H1 (cell line): ENCODE measurements at regions of chr5 and their contacts with region 1.

Region 1: GRCh38 chr5:137660349-137660817 is 75.5 kb downstream of the KLHL3 start:
- DNase-seq: peak; percentile 68 to 79
- H3K4me3 ChIP-seq: no peak overlapping the region
- H3K27ac ChIP-seq: no peak overlapping the region
- H3K4me1 ChIP-seq: peaks cover 0 to 3% (median 0%) of the 10 kb centered on the region in 4 experiments; a peak in 1 of 7 replicates
- H3K27me3 ChIP-seq: no peaks in the 10 kb centered on the region
- CTCF ChIP-seq: peak; percentile 54 to 86 (median 83)
- EP300 ChIP-seq: no peak
- POLR2A ChIP-seq: no peak
- RAD21 ChIP-seq: peak; percentile 84 to 86

Region 2: DNA sequence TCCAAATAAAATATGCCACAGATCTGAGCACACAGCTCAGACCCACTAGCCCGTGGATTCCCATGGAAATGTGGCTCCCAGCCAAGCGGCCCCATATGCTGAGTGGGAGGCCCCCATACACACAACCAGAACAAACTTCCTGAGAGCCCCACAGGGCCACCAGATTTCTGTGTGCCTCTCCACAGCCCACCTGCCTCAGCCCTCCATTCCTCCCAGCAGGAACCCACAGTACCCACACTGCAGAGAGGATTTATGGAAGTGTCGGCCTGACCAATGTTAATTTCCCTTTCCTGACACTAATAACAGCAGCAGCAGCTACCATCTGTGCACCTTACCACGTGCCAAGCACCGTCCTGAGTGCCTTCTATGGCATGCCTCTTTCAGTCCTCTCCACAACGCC is 62.0 kb before region 1 on chr5:
- CTCF ChIA-PET with region 1: no interaction called
- POLR2A ChIA-PET with region 1: no interaction called
- DNase-seq: no peak
- H3K4me3 ChIP-seq: no peak overlapping the region
- H3K27ac ChIP-seq: no peak overlapping the region
- H3K4me1 ChIP-seq: no peaks in the 10 kb centered on the region
- H3K27me3 ChIP-seq: no peaks in the 10 kb centered on the region
- CTCF ChIP-seq: no peak
- EP300 ChIP-seq: no peak
- POLR2A ChIP-seq: no peak
- RAD21 ChIP-seq: no peak

Region 3: GRCh38 chr5:137629646-137630045 is 30.7 kb before region 1 on chr5:
- CTCF ChIA-PET with region 1: interaction called, 17 read pairs
- POLR2A ChIA-PET with region 1: no interaction called
- DNase-seq: peak in 1 of 2 experiments; percentile 58
- H3K4me3 ChIP-seq: no peak overlapping the region
- H3K27ac ChIP-seq: no peak overlapping the region
- H3K4me1 ChIP-seq: peaks cover 3 to 6% (median 4%) of the 10 kb centered on the region in 4 experiments; a peak in 6 of 7 replicates
- H3K27me3 ChIP-seq: no peaks in the 10 kb centered on the region
- CTCF ChIP-seq: peak in 2 of 3 experiments; percentile 77 to 84; a peak in 3 of 4 replicates
- EP300 ChIP-seq: no peak
- POLR2A ChIP-seq: no peak
- RAD21 ChIP-seq: peak; percentile 94 to 96

Region 4: GRCh38 chr5:137672019-137672418 is 11.6 kb after region 1 on chr5:
- CTCF ChIA-PET with region 1: interaction called, 41 read pairs
- POLR2A ChIA-PET with region 1: no interaction called
- DNase-seq: no peak
- H3K4me3 ChIP-seq: no peak overlapping the region
- H3K27ac ChIP-seq: no peak overlapping the region
- H3K4me1 ChIP-seq: no peaks in the 10 kb centered on the region
- H3K27me3 ChIP-seq: no peaks in the 10 kb centered on the region
- CTCF ChIP-seq: no peak
- EP300 ChIP-seq: no peak
- POLR2A ChIP-seq: no peak
- RAD21 ChIP-seq: no peak

Region 5: GRCh38 chr5:137718611-137719010 is 58.2 kb after region 1 on chr5:
- CTCF ChIA-PET with region 1: interaction called, 19 read pairs
- POLR2A ChIA-PET with region 1: no interaction called
- DNase-seq: no peak
- H3K4me3 ChIP-seq: no peak overlapping the region
- H3K27ac ChIP-seq: no peak overlapping the region
- H3K4me1 ChIP-seq: peaks cover 0 to 2% (median 0%) of the 10 kb centered on the region in 4 experiments; a peak in 1 of 7 replicates
- H3K27me3 ChIP-seq: no peaks in the 10 kb centered on the region
- CTCF ChIP-seq: no peak
- EP300 ChIP-seq: no peak
- POLR2A ChIP-seq: no peak
- RAD21 ChIP-seq: no peak

Region 6: DNA sequence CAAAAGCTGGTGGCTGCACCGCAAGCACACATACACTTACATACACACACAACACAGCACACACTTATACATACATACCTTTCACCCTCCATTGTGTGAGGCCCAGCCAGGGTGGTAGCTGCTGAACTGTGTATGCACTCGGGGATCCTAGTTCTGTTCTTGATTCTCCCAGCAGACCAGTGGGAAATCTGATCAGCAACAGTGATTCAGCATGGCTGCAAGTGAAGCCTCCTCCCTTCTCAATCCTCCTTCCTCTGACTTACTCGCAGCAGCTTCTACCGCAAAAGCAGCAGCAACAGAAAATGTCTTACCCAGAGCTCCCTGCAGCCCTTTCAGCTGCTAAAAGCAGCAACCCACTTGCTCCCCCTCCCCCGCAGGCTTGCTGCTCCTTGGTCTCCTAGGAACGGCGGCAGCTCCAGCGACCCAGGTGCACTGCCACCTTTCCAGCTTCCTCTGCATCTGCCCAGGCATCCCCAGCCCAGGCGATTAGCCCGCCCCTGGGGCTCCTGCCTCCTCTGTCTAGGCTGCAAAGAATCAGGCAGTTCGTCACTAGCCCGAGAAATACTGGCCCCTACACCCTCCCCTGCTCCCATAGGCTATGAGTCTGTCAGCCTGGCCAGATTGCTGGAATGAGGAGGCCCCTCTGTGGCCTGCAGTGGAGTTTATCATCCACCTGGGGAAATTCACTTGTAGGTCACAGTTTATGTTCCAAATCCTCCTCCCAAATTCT is 75.3 kb after region 1 on chr5 and contains the start of gene KLHL3:
- CTCF ChIA-PET with region 1: interaction called, 103 read pairs
- POLR2A ChIA-PET with region 1: interaction called, 3 read pairs
- DNase-seq: peak; percentile 76 to 87
- H3K4me3 ChIP-seq: peak within 1 kb of the TSS; percentile 67 to 90 (median 72)
- H3K27ac ChIP-seq: peak within 1 kb of the TSS; percentile 63
- H3K4me1 ChIP-seq: peaks cover 3 to 14% (median 6%) of the 10 kb centered on the region in 4 experiments; a peak in 5 of 7 replicates
- H3K27me3 ChIP-seq: no peaks in the 10 kb centered on the region
- CTCF ChIP-seq: peak; percentile 38 to 60 (median 39)
- EP300 ChIP-seq: no peak
- POLR2A ChIP-seq: peak in 1 of 2 experiments; percentile 59; a peak in 2 of 3 replicates
- RAD21 ChIP-seq: peak; percentile 76 to 79
- total RNA-seq, gene KLHL3: 10.5 and 13.7 TPM in 2 replicates